GM13977 (cell line): ENCODE measurements at regions of chr7 and their contacts with region 1.

Region 1: GRCh38 chr7:137656227-137656849 is 190.4 kb downstream of the DGKI start:
- DNase-seq: peak; percentile 69
- CTCF ChIP-seq: peak; percentile 69

Region 2: DNA sequence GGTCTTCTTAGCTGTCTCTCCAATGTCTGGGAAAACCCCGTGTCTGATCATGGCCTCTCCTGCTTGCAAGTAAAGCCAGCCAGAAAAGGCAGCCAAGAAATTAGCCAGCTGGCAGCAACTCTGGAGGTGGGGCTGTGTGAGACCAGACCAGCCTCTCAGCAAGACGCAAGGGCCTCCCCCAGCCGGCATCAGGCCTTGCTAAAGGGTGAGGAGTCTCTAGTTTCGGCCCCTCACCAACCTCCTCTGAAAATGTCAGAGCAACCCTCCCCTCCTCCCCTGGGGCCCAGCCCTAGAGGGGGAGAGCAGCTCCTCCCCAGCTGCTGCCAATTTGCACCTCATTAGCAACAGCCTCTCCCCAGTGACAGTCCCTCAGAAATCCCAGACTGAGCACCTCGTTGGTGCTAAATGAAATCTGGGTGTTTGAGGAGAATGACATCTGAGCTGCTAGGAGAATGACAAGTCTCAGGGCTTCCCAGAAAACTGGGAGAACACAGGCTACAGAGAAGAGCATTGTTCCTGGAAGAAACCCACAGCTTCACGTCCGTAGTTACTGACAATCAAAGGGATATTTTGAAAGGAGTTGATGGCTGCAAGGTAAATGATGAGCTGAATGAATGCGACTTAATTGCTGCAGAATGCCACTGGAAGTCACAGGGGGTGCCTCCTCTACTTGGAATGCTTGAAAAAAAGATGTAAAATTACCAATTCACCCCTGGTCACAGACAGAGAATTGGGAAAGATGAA is 164.5 kb after region 1 on chr7:
- in situ Hi-C with region 1: no loop called
- DNase-seq: peak; percentile 31
- CTCF ChIP-seq: no peak

Region 3: DNA sequence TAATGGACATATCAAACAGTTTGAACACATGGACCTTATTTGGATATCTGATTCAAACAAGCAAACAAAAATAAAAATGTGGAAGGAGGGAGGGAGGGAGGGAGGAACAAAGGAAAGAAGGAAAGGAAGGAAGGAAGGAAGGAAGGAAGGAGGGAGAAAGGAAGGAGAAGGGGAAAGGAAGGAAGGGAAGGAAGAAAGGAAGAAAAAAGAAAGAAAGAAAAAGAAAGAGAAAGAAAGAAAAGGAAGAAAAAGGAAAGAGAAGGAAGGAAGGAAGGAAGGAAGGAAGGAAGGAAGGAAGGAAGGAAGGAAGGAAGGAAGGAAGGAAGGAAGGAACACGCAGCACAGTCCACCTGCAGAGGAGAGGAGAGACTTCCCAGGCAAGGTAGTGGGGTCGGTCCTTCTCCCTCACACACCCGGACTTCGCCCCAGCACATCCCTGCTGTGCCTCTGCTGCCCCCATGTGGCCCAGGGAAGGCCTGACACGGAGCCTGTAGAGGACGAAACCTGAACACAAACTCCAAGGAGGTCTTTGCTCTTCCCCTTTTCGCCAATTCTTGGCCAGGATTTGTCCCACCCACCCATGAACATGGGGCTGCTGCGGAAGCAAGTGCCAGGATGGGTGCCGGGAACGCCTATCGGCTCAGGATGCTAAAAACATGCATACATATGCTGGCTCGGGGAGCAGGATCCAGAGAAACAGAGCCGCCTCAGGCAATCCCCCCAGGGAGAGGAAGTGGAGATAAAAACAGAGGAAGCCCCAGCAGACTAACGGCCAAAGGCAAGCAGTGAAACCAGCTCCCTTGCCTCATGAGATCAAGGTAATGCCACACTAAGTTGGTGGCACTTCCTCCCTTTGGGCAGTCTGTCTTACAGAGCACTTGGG is 242.7 kb after region 1 on chr7:
- in situ Hi-C with region 1: loop called (anchors 5 kb)
- DNase-seq: peak; percentile 68
- CTCF ChIP-seq: peak; percentile 98

Region 4: GRCh38 chr7:138002096-138002827 is 345.9 kb after region 1 on chr7:
- in situ Hi-C with region 1: loop called (anchors 10 kb)
- DNase-seq: peak; percentile 92
- CTCF ChIP-seq: peak; percentile 67